ENCODE measurements at regions of chr11 and their contacts with region 1.

Region 1: GRCh38 chr11:78645226-78646202 is 70.8 kb upstream of the NARS2 start:
- DNase-seq: peak; percentile 77 to 95
- H3K4me3 ChIP-seq: no peak overlapping the region
- H3K27ac ChIP-seq: no peak overlapping the region
- H3K4me1 ChIP-seq: no peaks in the 10 kb centered on the region
- H3K27me3 ChIP-seq: no peaks in the 10 kb centered on the region; a peak in 1 of 7 replicates
- CTCF ChIP-seq: peak; percentile 89 to 99 (median 90)
- EP300 ChIP-seq: no peak
- POLR2A ChIP-seq: no peak
- RAD21 ChIP-seq: peak; percentile 96

Region 2: DNA sequence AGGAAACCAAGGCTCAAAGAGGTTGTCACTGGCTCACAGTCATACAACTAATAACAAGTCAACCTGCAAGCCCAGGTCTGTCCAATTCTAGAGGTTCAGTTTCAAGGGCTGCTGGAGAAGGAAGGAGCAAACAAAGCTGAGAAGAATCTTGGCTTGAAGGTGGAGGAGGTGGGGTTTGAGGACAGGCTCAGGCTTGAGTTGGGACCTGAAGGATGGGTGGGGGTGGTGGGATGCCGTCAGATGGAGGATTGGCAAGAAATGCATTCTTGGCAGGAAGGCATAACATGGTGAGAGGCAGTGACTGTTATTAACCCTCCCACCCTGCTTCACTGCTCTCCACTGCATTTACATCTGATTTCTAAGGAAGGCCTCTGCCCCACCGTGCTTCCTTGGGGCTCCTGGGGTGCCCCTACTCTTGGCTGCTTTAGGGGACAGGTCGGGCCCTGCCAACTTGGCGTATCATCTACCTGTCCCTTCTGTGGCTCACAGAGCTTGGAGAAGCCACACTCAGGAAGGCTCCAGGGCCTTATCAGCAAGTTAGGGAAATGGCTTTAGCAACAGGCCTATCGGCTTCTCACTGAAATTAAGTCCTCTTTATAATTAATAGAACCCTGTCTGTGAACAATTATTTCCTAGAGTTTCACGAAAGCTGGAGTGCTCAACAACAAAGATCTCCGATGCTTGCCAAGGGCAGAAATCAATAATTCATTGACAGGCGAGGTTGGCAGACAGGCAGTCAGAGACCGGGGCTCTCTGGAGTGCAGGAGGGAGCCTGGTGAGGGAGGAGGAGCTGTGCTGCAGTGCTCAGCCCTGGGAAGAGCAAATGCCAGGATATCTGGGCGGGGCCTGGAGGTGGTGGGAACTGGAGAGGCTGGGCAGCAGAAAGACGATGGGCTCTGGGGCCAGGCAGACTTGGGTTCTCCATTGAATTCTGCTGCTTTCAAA is 14.1 kb after region 1 on chr11:
- CTCF ChIA-PET with region 1: interaction called, 143 read pairs
- POLR2A ChIA-PET with region 1: no interaction called
- DNase-seq: peak in 1 of 2 experiments; percentile 46
- H3K4me3 ChIP-seq: no peak overlapping the region
- H3K27ac ChIP-seq: no peak overlapping the region
- H3K4me1 ChIP-seq: no peaks in the 10 kb centered on the region; a peak in 1 of 7 replicates
- H3K27me3 ChIP-seq: no peaks in the 10 kb centered on the region
- CTCF ChIP-seq: no peak
- EP300 ChIP-seq: no peak
- POLR2A ChIP-seq: no peak
- RAD21 ChIP-seq: no peak

Region 3: GRCh38 chr11:78698612-78699011 is 53.1 kb after region 1 on chr11:
- CTCF ChIA-PET with region 1: interaction called, 80 read pairs
- POLR2A ChIA-PET with region 1: no interaction called
- DNase-seq: no peak
- H3K4me3 ChIP-seq: no peak overlapping the region
- H3K27ac ChIP-seq: no peak overlapping the region
- H3K4me1 ChIP-seq: no peaks in the 10 kb centered on the region
- H3K27me3 ChIP-seq: no peaks in the 10 kb centered on the region
- CTCF ChIP-seq: no peak
- EP300 ChIP-seq: no peak
- POLR2A ChIP-seq: no peak
- RAD21 ChIP-seq: no peak

Region 4: GRCh38 chr11:78737891-78738290 is 92.4 kb after region 1 on chr11:
- CTCF ChIA-PET with region 1: interaction called, 12 read pairs
- POLR2A ChIA-PET with region 1: no interaction called
- DNase-seq: no peak
- H3K4me3 ChIP-seq: no peak overlapping the region
- H3K27ac ChIP-seq: no peak overlapping the region
- H3K4me1 ChIP-seq: no peaks in the 10 kb centered on the region
- H3K27me3 ChIP-seq: no peaks in the 10 kb centered on the region
- CTCF ChIP-seq: no peak
- EP300 ChIP-seq: no peak
- POLR2A ChIP-seq: no peak
- RAD21 ChIP-seq: no peak

Region 5: GRCh38 chr11:78798660-78799059 is 153.1 kb after region 1 on chr11:
- CTCF ChIA-PET with region 1: interaction called, 43 read pairs
- POLR2A ChIA-PET with region 1: no interaction called
- DNase-seq: peak; percentile 34 to 86
- H3K4me3 ChIP-seq: no peak overlapping the region
- H3K27ac ChIP-seq: no peak overlapping the region
- H3K4me1 ChIP-seq: peaks cover 0 to 17% (median 10%) of the 10 kb centered on the region in 4 experiments; a peak in 5 of 7 replicates
- H3K27me3 ChIP-seq: no peaks in the 10 kb centered on the region
- CTCF ChIP-seq: peak; percentile 81 to 97 (median 95)
- EP300 ChIP-seq: no peak
- POLR2A ChIP-seq: no peak
- RAD21 ChIP-seq: peak; percentile 76 to 86

Region 6: GRCh38 chr11:78935398-78936068 is 290.0 kb after region 1 on chr11:
- CTCF ChIA-PET with region 1: interaction called, 15 read pairs
- POLR2A ChIA-PET with region 1: no interaction called
- DNase-seq: no peak
- H3K4me3 ChIP-seq: no peak overlapping the region
- H3K27ac ChIP-seq: no peak overlapping the region
- H3K4me1 ChIP-seq: peaks cover 0 to 13% (median 6%) of the 10 kb centered on the region in 4 experiments; a peak in 5 of 7 replicates
- H3K27me3 ChIP-seq: peaks cover 11 to 30% (median 25%) of the 10 kb centered on the region in 4 experiments; a peak in 6 of 7 replicates
- CTCF ChIP-seq: no peak
- EP300 ChIP-seq: no peak
- POLR2A ChIP-seq: no peak
- RAD21 ChIP-seq: no peak

Region 7: GRCh38 chr11:79100093-79100910 is 454.8 kb after region 1 on chr11:
- CTCF ChIA-PET with region 1: interaction called, 22 read pairs
- POLR2A ChIA-PET with region 1: no interaction called
- DNase-seq: peak in 1 of 2 experiments; percentile 57
- H3K4me3 ChIP-seq: no peak overlapping the region
- H3K27ac ChIP-seq: no peak overlapping the region
- H3K4me1 ChIP-seq: no peaks in the 10 kb centered on the region
- H3K27me3 ChIP-seq: no peaks in the 10 kb centered on the region
- CTCF ChIP-seq: peak; percentile 65 to 80 (median 74)
- EP300 ChIP-seq: no peak
- POLR2A ChIP-seq: no peak
- RAD21 ChIP-seq: peak; percentile 88 to 90

Measured in H1 (cell line).